Activated naive CD4-positive, alpha-beta T cell treated with anti-CD3 and anti-CD28 coated beads, Interleukin-2, amount 10 ng/mL, durations not matched to agents 7 days and 5 days (primary cell): ENCODE measurements at regions of chr15 and their contacts with region 1.

Region 1: DNA sequence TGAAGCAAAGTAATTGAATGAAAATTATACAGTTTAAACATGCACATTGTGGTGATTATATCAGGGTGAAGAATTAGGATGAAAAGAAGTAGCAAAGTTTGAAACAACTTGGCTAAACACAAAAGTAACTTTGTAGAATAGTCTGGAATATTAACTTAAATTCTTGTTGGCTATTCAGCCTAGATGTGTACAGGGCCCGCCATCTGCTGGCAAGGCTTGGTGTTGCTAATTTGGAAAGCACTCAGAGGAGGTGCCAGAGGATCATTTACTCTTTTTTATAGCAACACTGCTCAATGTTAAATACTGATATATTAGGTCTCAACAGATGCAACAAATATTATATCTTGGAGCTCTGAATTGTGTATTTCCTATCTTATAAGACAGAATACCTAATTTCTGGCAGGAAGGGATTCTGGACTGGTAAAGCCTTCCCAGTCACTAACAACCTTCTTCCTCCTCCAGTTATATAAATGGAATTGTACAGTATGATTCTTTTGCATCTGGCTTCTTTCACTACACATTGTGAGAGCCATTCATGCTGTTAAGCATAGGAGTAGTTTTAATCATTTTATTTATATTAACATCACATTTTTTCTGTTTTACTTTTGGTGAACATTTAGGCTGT is 36.1 kb downstream of the TTC23 start:
- DNase-seq: peak; percentile 82
- H3K4me3 Mint-ChIP-seq: no peak overlapping the region
- H3K27ac Mint-ChIP-seq: no peak overlapping the region
- H3K4me1 Mint-ChIP-seq: no peaks in the 10 kb centered on the region
- H3K27me3 Mint-ChIP-seq: no peaks in the 10 kb centered on the region

Region 2: GRCh38 chr15:99104788-99105513 is 108.3 kb before region 1 on chr15 and contains the start of gene SYNM:
- CTCF ChIA-PET with region 1: interaction called, 51 read pairs
- DNase-seq: peak; percentile 44
- H3K4me3 Mint-ChIP-seq: peak within 1 kb of the TSS; percentile 70
- H3K27ac Mint-ChIP-seq: peak within 1 kb of the TSS; percentile 76
- H3K4me1 Mint-ChIP-seq: peaks cover 39% of the 10 kb centered on the region
- H3K27me3 Mint-ChIP-seq: peaks cover 79% of the 10 kb centered on the region